BJ (cell line): ENCODE measurements at regions of chr1 and their contacts with region 1.

Region 1: DNA sequence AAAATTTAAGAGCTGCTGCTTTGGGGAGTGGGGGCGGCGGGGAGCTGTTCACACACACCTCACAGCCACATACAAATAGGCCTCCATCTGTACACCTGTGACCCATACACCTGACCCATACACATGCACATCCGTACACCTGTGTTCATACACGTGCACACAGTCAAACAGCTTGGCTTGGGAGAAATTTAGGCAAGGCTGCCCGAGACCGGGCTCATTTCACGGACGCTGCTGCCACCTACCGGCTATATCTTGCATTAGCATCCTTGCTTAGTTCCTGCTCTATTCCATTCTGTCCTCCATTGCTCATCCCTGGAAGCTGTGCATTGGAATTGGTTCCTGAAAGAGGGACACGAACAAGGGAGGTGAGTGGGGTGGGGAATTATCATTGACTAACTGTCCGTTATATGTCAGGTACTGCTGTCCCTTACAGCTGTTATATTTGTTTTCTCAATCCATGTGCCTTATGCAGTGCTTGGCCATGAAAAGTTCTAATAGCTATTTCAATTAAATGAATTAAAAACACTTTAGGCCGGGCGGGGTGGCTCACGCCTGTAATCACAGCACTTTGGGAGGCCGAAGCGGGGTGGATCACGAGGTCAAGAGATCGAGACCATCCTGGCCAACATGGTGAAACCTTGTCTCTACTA is 37.1 kb upstream of the EPB41 start:
- DNase-seq: no peak
- H3K4me3 ChIP-seq: no peak overlapping the region
- H3K27me3 ChIP-seq: peaks cover 2% of the 10 kb centered on the region; the same call in 1 of the 2 replicates
- CTCF ChIP-seq: peak; percentile 85

Region 2: GRCh38 chr1:28642847-28643635 is 234.2 kb before region 1 on chr1 and contains the start of gene TAF12:
- CTCF ChIA-PET with region 1: interaction called, 16 read pairs
- POLR2A ChIA-PET with region 1: interaction called, 4 read pairs
- DNase-seq: peak; percentile 85
- H3K4me3 ChIP-seq: peak within 1 kb of the TSS; percentile 71
- H3K27me3 ChIP-seq: no peaks in the 10 kb centered on the region
- CTCF ChIP-seq: peak; percentile 36
- polyA plus RNA-seq, gene TAF12: 31.8 and 46.8 TPM in 2 replicates

Region 3: DNA sequence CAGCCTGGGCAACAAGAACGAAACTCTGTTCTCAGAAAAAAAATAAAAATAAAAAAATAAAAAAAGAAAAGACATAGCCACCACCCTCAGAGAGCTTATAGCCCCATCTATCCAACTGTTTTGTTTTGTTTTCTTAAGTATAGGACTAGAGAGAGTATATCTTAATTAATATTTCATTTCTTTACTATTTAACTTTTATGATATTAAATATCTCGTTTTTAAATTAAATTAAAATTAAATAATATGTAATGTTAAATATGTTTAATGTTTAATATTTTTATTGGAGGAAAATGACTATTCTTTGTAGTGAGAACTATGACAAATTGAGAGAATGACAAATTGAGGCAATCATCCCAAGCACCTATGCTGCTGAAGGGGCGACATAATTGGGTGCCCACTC is 173.6 kb before region 1 on chr1:
- CTCF ChIA-PET with region 1: no interaction called
- POLR2A ChIA-PET with region 1: no interaction called
- DNase-seq: no peak
- H3K4me3 ChIP-seq: no peak overlapping the region
- H3K27me3 ChIP-seq: no peaks in the 10 kb centered on the region
- CTCF ChIP-seq: no peak

Region 4: GRCh38 chr1:28775121-28775944 is 101.9 kb before region 1 on chr1:
- CTCF ChIA-PET with region 1: interaction called, 276 read pairs
- POLR2A ChIA-PET with region 1: no interaction called
- DNase-seq: no peak
- H3K4me3 ChIP-seq: peak overlapping the region; percentile 9; the same call in 1 of the 2 replicates
- H3K27me3 ChIP-seq: no peaks in the 10 kb centered on the region
- CTCF ChIP-seq: no peak

Region 5: GRCh38 chr1:28804071-28804470 is 73.2 kb before region 1 on chr1:
- CTCF ChIA-PET with region 1: interaction called, 70 read pairs
- POLR2A ChIA-PET with region 1: no interaction called
- DNase-seq: no peak
- H3K4me3 ChIP-seq: no peak overlapping the region
- H3K27me3 ChIP-seq: peaks cover 1% of the 10 kb centered on the region
- CTCF ChIP-seq: no peak

Region 6: DNA sequence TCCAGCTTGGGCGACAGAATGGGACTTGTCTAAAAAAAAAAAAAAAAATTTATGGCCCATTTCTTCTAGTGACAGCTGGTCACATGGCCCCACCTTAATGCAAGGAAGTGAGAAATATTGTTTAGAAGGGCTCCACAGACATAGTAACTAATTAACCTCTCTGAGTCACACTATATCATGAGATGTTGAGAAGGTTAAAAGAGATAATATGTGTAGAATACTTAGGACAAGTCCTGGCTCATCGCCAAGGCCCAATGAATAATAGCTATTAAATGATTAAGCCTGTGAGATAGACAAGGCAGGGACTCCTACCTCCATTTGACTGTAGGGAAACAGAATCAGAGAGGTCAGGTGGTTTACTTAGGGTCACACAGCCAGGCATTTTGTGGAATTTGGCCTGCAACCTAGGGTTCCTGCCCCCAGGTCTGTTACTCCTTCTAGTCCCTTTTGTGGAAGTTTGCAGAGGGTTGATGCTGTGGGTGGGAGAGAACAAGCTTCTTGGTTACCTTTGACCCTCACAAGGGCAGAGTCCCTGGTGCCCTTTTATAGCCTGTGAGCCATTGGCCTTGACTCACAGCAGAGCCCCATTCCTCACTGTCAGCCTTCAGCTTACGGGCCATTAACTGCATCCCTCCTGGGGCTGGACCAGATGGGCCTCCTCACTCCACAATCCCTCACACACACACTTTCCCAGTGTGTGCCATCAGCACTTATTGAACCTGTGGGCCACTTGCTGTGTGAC is 16.8 kb before region 1 on chr1:
- CTCF ChIA-PET with region 1: interaction called, 27 read pairs
- POLR2A ChIA-PET with region 1: no interaction called
- DNase-seq: no peak
- H3K4me3 ChIP-seq: no peak overlapping the region
- H3K27me3 ChIP-seq: peaks cover 7% of the 10 kb centered on the region
- CTCF ChIP-seq: no peak

Region 7: GRCh38 chr1:28956038-28956464 is 78.8 kb after region 1 on chr1:
- CTCF ChIA-PET with region 1: no interaction called
- POLR2A ChIA-PET with region 1: no interaction called
- DNase-seq: no peak
- H3K4me3 ChIP-seq: no peak overlapping the region
- H3K27me3 ChIP-seq: no peaks in the 10 kb centered on the region
- CTCF ChIP-seq: no peak

Region 8: GRCh38 chr1:29033829-29034466 is 156.7 kb after region 1 on chr1:
- CTCF ChIA-PET with region 1: interaction called, 369 read pairs
- POLR2A ChIA-PET with region 1: no interaction called
- DNase-seq: no peak
- H3K4me3 ChIP-seq: no peak overlapping the region
- H3K27me3 ChIP-seq: no peaks in the 10 kb centered on the region
- CTCF ChIP-seq: peak; percentile 54